Vagina (tissue), 2 donors: ENCODE measurements at regions of chr9 and their contacts with region 1.

Region 1: DNA sequence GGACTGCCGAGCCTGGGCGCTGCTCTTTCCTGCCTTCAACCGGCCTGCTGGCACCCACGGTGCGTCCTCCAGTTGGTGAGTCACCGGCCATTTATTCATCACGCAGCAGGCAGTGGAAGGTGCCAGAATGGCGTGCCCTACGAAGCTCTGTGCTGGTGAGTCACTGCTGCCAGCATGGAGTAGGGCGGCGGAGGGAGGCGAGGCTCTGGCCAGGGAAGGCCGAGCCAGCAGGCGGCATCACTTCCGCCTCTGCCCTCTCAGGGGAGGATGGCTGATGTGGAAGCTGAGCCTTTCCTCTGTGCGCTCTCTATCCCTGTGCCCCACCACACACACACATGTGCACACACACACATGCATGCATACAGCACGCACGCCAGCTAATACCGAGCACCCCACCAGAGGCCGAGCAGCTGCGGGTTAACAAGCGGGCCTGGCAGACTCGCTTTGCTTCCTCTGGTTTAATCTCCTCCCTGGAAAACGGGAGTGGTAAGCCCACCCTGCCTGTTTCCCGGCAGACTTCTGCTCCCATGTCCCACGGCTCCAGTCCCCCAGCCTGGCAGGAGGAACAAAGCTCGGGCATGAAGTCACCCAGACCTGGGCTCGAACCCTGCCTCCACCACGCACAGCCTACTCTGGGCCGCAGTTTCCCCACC is 39.2 kb downstream of the OLFM1 start:
- DNase-seq: no peak
- H3K4me3 ChIP-seq: no peak overlapping the region
- H3K27ac ChIP-seq: peak overlapping the region; percentile 36
- H3K4me1 ChIP-seq: peaks cover 24% of the 10 kb centered on the region
- H3K27me3 ChIP-seq: no peaks in the 10 kb centered on the region
- CTCF ChIP-seq: no peak
- POLR2A ChIP-seq: no peak

Region 2: GRCh38 chr9:135639196-135639595 is 512.5 kb after region 1 on chr9 and contains the start of gene GLT6D1:
- intact Hi-C with region 1: loop called (anchors 5 kb)
- DNase-seq: no peak
- H3K4me3 ChIP-seq: no peak within 1 kb of the TSS
- H3K27ac ChIP-seq: no peak within 1 kb of the TSS
- H3K4me1 ChIP-seq: no peaks in the 10 kb centered on the region
- H3K27me3 ChIP-seq: no peaks in the 10 kb centered on the region
- CTCF ChIP-seq: no peak
- POLR2A ChIP-seq: no peak
- total RNA-seq, gene GLT6D1: not detected